Endothelial cell of umbilical vein (primary cell): ENCODE measurements at regions of chr12 and their contacts with region 1.

Region 1: DNA sequence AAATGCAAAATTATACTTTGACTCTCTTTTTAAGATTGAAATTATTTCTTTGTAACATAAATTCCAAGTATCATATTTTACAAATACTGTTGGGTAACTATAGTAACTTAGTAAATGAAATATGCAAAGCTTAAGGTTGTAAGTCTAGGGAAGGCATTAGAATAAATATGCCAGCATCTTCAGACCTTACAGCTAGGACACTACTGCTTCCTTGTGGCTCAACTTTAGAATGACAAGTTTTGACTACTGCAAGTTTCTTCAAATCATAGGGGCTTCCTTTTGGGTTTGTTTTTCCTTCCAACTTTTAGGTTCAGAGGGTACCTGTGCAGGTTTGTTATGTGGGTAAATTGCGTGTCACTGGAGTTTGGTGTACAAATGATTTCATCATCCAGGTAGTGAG is 17.7 kb upstream of the ANP32D start:
- DNase-seq: peak; percentile 59
- H3K4me3 ChIP-seq: no peak overlapping the region
- H3K27ac ChIP-seq: no peak overlapping the region
- H3K4me1 ChIP-seq: no peaks in the 10 kb centered on the region
- H3K27me3 ChIP-seq: peaks cover 0 to 5% of the 10 kb centered on the region in 2 experiments
- CTCF ChIP-seq: peak; percentile 30 to 57
- POLR2A ChIP-seq: no peak

Region 2: GRCh38 chr12:48105862-48106680 is 348.6 kb before region 1 on chr12 and contains the start of gene SENP1:
- CTCF ChIA-PET with region 1: interaction called, 3 read pairs
- POLR2A ChIA-PET with region 1: no interaction called
- dilution Hi-C with region 1: no loop called
- intact Hi-C with region 1: loop called (anchors 10 kb)
- DNase-seq: peak; percentile 85
- H3K4me3 ChIP-seq: peak within 1 kb of the TSS; percentile 41 to 91 (median 81)
- H3K27ac ChIP-seq: peak within 1 kb of the TSS; percentile 98
- H3K4me1 ChIP-seq: peaks cover 12% of the 10 kb centered on the region
- H3K27me3 ChIP-seq: peaks cover 0 to 2% of the 10 kb centered on the region in 2 experiments
- CTCF ChIP-seq: peak in 1 of 2 donors; percentile 11
- POLR2A ChIP-seq: peak; percentile 83
- total RNA-seq, gene SENP1: 20.5 and 21.3 TPM in 2 replicates

Region 3: GRCh38 chr12:48183091-48183875 is 271.4 kb before region 1 on chr12 and contains the start of gene CCDC184:
- CTCF ChIA-PET with region 1: interaction called, 10 read pairs
- POLR2A ChIA-PET with region 1: no interaction called
- dilution Hi-C with region 1: no loop called
- intact Hi-C with region 1: loop called (anchors 5 kb)
- DNase-seq: peak; percentile 82
- H3K4me3 ChIP-seq: peak within 1 kb of the TSS; percentile 1 to 57 (median 48)
- H3K27ac ChIP-seq: no peak within 1 kb of the TSS
- H3K4me1 ChIP-seq: no peaks in the 10 kb centered on the region
- H3K27me3 ChIP-seq: peaks cover 45 to 57% of the 10 kb centered on the region in 2 experiments
- CTCF ChIP-seq: peak; percentile 28 to 67
- POLR2A ChIP-seq: no peak
- total RNA-seq, gene CCDC184: 0.18 TPM in 1 of 2 replicates, not detected in the other

Region 4: GRCh38 chr12:48189331-48190125 is 265.1 kb before region 1 on chr12:
- CTCF ChIA-PET with region 1: interaction called, 6 read pairs
- POLR2A ChIA-PET with region 1: no interaction called
- dilution Hi-C with region 1: no loop called
- intact Hi-C with region 1: loop called (anchors 2 kb)
- DNase-seq: peak; percentile 82
- H3K4me3 ChIP-seq: no peak overlapping the region
- H3K27ac ChIP-seq: no peak overlapping the region
- H3K4me1 ChIP-seq: peaks cover 2% of the 10 kb centered on the region
- H3K27me3 ChIP-seq: peaks cover 25 to 38% of the 10 kb centered on the region in 2 experiments
- CTCF ChIP-seq: peak; percentile 62 to 78
- POLR2A ChIP-seq: no peak

Region 5: GRCh38 chr12:48197971-48198671 is 256.5 kb before region 1 on chr12:
- CTCF ChIA-PET with region 1: interaction called, 19 read pairs
- POLR2A ChIA-PET with region 1: no interaction called
- dilution Hi-C with region 1: no loop called
- intact Hi-C with region 1: loop called (anchors 1 kb)
- DNase-seq: peak; percentile 94
- H3K4me3 ChIP-seq: peak overlapping the region; percentile 23 to 71 (median 44)
- H3K27ac ChIP-seq: peak overlapping the region; percentile 67
- H3K4me1 ChIP-seq: peaks cover 10% of the 10 kb centered on the region
- H3K27me3 ChIP-seq: peaks cover 0 to 19% of the 10 kb centered on the region in 2 experiments
- CTCF ChIP-seq: no peak
- POLR2A ChIP-seq: peak; percentile 96

Region 6: GRCh38 chr12:48286665-48287064 is 168.0 kb before region 1 on chr12:
- CTCF ChIA-PET with region 1: interaction called, 84 read pairs
- POLR2A ChIA-PET with region 1: no interaction called
- dilution Hi-C with region 1: no loop called
- intact Hi-C with region 1: loop called (anchors 1 kb)
- DNase-seq: no peak
- H3K4me3 ChIP-seq: no peak overlapping the region
- H3K27ac ChIP-seq: no peak overlapping the region
- H3K4me1 ChIP-seq: peaks cover 2% of the 10 kb centered on the region
- H3K27me3 ChIP-seq: peaks cover 3% of the 10 kb centered on the region in 2 experiments
- CTCF ChIP-seq: peak; percentile 25 to 57
- POLR2A ChIP-seq: no peak

Region 7: DNA sequence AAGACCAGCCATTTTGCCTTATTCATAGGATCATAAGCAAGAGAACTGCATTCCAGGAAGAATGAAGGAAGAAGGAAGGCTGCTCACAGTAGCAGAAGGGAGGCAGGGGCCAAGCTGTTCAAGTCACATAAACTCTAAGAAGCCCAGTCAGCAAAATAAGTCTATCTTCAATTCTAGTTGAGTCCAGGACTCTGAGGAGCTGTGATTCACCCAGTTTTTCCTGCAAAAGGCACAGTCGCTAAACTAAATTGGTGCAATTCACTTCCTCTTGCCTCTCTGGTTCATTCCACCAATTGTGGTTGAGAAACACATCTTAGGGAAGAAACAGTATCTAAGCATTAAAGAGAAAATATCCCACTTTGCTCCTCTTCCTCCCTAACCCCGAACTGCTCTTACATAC is 113.7 kb before region 1 on chr12:
- CTCF ChIA-PET with region 1: interaction called, 4 read pairs
- POLR2A ChIA-PET with region 1: no interaction called
- dilution Hi-C with region 1: no loop called
- intact Hi-C with region 1: loop called (anchors 5 kb)
- DNase-seq: no peak
- H3K4me3 ChIP-seq: no peak overlapping the region
- H3K27ac ChIP-seq: no peak overlapping the region
- H3K4me1 ChIP-seq: no peaks in the 10 kb centered on the region
- H3K27me3 ChIP-seq: no peaks in the 10 kb centered on the region
- CTCF ChIP-seq: no peak
- POLR2A ChIP-seq: no peak

Region 8: DNA sequence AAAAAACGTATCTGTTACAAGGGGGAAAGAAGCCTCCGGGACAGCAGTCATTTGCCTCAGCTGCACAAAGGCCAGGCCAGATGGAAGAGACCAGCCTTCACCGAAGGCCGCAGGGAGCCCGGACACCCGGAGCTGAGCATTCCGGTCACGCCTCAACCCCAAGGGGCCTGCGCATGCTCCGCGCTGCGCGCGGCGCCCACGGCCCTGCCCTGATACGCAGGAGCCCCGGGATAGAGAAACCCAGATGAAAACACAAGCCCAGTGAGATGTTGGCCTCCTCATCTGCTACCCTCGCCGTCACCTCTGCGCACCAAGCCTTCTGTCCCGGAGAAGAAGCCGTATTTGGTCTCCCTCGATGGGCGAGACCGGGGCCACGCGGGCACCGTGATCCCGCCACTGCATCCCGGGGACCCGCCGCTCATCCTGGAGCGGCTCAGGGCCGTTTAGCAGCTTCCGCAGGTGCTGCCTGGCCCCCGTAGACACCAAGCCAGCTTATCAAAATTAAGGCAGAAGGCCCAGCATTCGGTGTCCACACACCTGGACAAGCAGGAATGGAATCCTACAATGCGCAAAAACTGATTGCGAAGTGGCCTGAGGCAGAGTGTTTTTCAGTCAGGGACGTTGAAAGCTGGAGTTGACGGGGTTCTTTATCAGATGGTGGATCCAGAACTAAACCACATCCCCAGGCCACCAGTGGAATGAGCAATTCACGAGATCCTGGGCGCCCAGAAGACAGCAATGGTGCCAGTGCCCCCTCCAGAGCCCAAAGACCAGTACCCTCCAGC is 73.4 kb after region 1 on chr12:
- CTCF ChIA-PET with region 1: no interaction called
- POLR2A ChIA-PET with region 1: no interaction called
- dilution Hi-C with region 1: no loop called
- intact Hi-C with region 1: no loop called
- DNase-seq: no peak
- H3K4me3 ChIP-seq: no peak overlapping the region
- H3K27ac ChIP-seq: no peak overlapping the region
- H3K4me1 ChIP-seq: no peaks in the 10 kb centered on the region
- H3K27me3 ChIP-seq: no peaks in the 10 kb centered on the region
- CTCF ChIP-seq: no peak
- POLR2A ChIP-seq: no peak